AG04449 (cell line): ENCODE measurements at regions of chr5 and their contacts with region 1.

Region 1: GRCh38 chr5:141557681-141558136 is 61.1 kb downstream of the DIAPH1 start:
- DNase-seq: peak; percentile 98
- H3K4me3 ChIP-seq: peak overlapping the region; percentile 32
- CTCF ChIP-seq: peak; percentile 72

Region 2: DNA sequence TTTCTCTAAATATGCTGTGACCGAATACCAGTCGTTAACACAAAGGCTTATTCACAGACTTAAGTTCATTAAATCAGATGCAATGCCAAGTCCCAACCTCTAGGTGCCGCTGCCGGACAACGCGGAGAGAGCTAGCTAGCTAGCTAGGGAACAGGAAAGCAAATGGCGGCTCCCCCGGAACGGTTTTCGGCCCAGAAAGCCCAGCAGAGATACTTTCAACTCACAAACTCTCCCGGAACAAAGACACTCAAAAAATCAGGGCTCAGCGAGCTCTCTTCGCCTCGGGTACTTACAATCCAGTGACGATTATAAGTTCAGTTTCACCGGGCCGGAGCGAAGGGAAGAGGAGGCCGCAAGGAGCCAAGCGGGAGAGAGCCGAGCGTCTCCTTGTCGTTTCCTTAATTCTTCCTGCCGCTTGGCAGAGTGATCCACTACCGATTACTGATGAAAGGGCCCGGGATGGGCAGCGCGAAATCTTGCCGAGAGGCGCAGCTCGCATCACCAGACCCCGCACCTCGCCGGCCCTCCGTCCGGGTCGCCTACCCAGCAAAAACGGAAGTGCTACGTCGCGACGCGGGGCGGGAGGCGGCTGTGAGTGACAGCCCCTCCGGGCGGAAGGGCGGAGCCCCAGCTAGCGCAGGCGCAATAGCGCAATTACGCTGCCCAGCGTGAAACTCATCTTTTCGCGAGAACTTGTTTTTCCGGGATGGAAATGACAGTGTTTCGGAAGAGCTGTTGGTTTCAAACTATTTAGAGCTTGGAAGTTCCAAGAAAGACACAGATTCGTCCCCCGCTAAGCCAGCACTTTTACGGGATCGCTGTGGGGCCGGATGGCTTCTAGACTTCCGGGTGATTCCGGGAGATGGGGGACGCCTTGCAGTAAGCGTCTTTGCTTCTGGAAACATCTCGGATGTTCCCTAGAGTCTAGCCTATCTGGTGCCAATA is 237.2 kb before region 1 on chr5 and contains the start of gene TAF7:
- CTCF ChIA-PET with region 1: interaction called, 209 read pairs
- POLR2A ChIA-PET with region 1: interaction called, 4 read pairs
- DNase-seq: peak; percentile 63
- H3K4me3 ChIP-seq: peak within 1 kb of the TSS; percentile 85
- CTCF ChIP-seq: peak; percentile 82

Region 3: GRCh38 chr5:141359790-141360426 is 197.8 kb before region 1 on chr5 and contains the start of gene PCDHGB2:
- CTCF ChIA-PET with region 1: interaction called, 37 read pairs
- POLR2A ChIA-PET with region 1: no interaction called
- DNase-seq: no peak
- H3K4me3 ChIP-seq: peak within 1 kb of the TSS; percentile 53
- CTCF ChIP-seq: peak; percentile 15

Region 4: GRCh38 chr5:141402553-141403260 is 155.0 kb before region 1 on chr5 and contains the start of gene PCDHGA9:
- CTCF ChIA-PET with region 1: interaction called, 50 read pairs
- POLR2A ChIA-PET with region 1: no interaction called
- DNase-seq: no peak
- H3K4me3 ChIP-seq: peak within 1 kb of the TSS; percentile 34
- CTCF ChIP-seq: no peak

Region 5: DNA sequence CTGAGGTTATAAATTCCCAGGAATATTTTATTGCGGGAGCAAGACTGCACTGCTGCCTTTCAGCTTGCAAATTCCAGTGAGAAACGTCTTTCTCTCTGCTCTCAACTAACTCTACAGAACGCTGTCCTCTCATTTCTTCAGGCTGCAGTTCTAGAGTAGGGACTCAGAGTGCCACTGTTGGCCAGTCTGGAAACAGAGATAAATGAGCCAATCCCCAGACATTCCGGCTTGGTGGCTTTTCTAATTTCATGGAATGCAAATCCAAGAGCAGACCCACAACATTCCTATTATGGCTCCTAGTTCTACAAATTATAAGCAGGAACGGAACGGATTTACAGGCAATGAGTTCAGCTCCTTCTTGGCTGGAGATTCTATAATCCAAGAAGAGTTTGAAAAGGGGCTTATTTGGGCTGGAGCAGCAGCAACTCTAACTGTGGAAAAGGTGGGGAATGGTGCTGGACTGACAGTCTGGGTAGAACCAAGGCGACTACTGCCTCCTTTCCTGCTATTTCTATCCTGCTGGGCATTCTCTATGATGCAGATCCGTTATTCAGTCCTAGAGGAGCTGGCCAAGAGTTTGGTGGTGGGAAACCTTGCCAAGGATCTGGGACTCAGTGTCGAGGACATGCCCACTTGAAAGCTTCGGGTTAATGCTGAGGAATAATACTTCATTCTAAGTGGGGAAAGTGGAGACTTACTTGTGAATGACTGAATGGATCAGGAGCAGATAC is 118.1 kb before region 1 on chr5:
- CTCF ChIA-PET with region 1: interaction called, 35 read pairs
- POLR2A ChIA-PET with region 1: interaction called, 4 read pairs
- DNase-seq: no peak
- H3K4me3 ChIP-seq: no peak overlapping the region
- CTCF ChIP-seq: no peak

Region 6: DNA sequence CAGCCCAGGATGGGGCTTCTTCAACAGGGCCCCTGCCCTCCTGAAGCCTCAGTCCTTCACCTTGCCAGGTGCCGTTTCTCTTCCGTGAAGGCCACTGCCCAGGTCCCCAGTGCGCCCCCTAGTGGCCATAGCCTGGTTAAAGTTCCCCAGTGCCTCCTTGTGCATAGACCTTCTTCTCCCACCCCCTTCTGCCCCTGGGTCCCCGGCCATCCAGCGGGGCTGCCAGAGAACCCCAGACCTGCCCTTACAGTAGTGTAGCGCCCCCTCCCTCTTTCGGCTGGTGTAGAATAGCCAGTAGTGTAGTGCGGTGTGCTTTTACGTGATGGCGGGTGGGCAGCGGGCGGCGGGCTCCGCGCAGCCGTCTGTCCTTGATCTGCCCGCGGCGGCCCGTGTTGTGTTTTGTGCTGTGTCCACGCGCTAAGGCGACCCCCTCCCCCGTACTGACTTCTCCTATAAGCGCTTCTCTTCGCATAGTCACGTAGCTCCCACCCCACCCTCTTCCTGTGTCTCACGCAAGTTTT is 45.3 kb before region 1 on chr5:
- CTCF ChIA-PET with region 1: interaction called, 67 read pairs
- POLR2A ChIA-PET with region 1: interaction called, 13 read pairs
- DNase-seq: no peak
- H3K4me3 ChIP-seq: peak overlapping the region; percentile 52
- CTCF ChIP-seq: peak; percentile 80

Region 7: DNA sequence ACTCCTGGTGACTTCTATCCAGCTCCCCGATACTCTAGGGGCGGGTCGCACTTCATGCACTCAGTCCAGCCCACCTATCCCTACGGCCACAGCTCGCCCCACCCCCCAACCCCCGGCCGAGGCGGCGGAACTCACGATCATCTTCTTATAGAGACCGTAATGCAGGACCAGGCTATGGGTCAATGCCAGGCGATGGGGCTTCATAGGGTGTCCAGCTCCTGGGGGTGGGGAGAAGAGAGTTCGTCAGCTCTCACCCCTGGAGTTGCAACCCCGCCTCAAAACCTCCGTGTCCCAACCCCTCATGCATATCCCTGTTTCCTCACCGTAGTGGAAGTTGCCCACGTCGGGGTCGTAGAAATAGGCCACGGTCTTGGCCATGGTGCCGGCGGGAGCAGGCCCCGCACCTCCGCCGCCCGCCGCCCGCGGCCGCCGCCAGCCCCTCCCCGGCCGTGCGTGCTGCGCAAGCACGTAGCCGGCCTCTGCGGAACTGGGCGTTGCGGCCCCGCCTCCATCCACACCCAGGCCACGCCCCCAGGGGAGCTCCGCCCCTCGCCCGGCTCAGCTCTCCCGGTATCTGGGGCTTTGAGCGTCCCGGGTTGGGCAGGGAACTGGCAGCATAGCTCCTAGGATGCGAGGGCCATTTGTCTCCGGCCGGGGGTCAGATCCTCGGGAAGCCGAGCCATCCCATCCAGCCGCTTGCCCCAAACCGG is 78.9 kb after region 1 on chr5 and contains the starts of genes HDAC3 and RELL2:
- CTCF ChIA-PET with region 1: no interaction called
- POLR2A ChIA-PET with region 1: no interaction called
- DNase-seq: no peak
- H3K4me3 ChIP-seq: peak within 1 kb of the TSS; percentile 99
- CTCF ChIP-seq: no peak

Region 8: DNA sequence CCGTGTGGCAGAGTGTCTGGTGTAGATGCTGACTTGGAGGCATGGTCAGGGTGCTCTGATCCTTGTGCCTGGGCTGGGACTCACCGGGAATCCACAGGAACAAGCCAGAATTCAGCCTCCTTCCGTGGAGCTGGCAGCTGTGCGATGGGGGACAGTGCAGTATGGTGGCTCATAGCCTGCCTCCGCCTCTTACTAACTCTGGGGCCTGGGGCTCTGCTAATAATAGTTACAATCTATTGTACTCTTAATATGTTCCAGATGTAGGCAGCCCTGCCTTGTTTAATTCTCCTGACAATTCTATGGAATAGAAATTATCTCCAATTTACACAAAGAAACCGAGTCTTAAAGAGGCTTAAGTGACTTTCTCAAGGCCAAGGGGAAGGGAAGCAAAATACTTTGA is 242.9 kb after region 1 on chr5:
- CTCF ChIA-PET with region 1: no interaction called
- POLR2A ChIA-PET with region 1: no interaction called
- DNase-seq: no peak
- H3K4me3 ChIP-seq: no peak overlapping the region
- CTCF ChIP-seq: no peak

Region 9: DNA sequence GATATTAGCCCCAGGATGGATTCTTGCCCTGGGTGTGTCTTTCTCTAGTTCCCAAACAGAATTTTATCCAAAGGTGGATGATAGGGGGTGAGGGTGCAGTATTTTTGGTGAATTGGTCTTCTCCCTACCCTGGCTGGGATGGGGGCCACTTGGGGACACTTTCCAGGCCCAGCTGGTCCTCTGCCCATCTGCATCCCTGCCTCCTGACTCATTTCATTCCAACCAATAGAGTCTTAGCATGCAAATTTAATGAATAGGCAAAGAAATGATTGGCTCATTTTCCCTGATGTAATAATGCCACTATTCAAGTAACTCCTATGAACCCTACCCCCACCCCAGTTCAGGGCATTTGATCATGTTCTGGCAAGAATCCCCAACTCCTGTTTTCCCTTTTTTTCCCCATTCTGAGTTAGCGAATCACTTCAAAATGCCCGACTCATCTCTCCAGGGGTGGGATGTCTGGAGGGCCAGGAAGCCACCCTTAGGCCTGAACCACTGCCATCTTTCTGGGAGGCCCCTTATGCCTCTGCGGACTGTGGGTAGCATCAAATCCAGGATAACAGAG is 263.7 kb after region 1 on chr5:
- CTCF ChIA-PET with region 1: no interaction called
- POLR2A ChIA-PET with region 1: no interaction called
- DNase-seq: peak; percentile 62
- H3K4me3 ChIP-seq: no peak overlapping the region
- CTCF ChIP-seq: no peak